H1 (cell line): ENCODE measurements at regions of chr4 and their contacts with region 1.

Region 1: GRCh38 chr4:99462875-99463464 is 27.8 kb upstream of the ADH7 start:
- DNase-seq: no peak
- H3K4me3 ChIP-seq: no peak overlapping the region
- H3K27ac ChIP-seq: no peak overlapping the region
- H3K4me1 ChIP-seq: no peaks in the 10 kb centered on the region; a peak in 1 of 7 replicates
- H3K27me3 ChIP-seq: no peaks in the 10 kb centered on the region
- CTCF ChIP-seq: peak; percentile 50 to 86 (median 82)
- EP300 ChIP-seq: no peak
- POLR2A ChIP-seq: no peak
- RAD21 ChIP-seq: peak; percentile 98 to 99

Region 2: GRCh38 chr4:99219479-99219878 is 243.5 kb before region 1 on chr4:
- CTCF ChIA-PET with region 1: no interaction called
- POLR2A ChIA-PET with region 1: no interaction called
- DNase-seq: no peak
- H3K4me3 ChIP-seq: no peak overlapping the region
- H3K27ac ChIP-seq: no peak overlapping the region
- H3K4me1 ChIP-seq: peaks cover 0 to 5% (median 1%) of the 10 kb centered on the region in 4 experiments; a peak in 2 of 7 replicates
- H3K27me3 ChIP-seq: no peaks in the 10 kb centered on the region
- CTCF ChIP-seq: no peak
- EP300 ChIP-seq: no peak
- POLR2A ChIP-seq: no peak
- RAD21 ChIP-seq: no peak

Region 3: DNA sequence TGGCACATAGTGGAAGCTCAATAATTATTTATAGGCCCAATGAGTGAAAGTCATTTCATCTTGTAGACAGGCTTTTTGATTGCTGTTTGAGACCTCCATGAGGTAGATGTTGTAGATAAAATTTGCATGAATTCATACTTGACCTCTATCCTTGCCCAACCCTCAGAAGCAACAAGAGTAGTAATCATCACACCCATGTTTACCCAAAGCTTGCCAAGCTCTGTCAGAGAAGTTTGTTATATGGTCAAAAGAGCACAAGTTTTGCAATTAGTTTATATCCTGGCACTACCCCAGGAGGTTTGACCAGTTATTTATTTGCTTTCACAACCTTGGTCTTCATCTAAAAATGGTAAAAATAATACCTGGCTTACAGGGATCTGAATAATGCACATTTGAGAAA is 48.6 kb before region 1 on chr4:
- CTCF ChIA-PET with region 1: interaction called, 99 read pairs
- POLR2A ChIA-PET with region 1: no interaction called
- DNase-seq: no peak
- H3K4me3 ChIP-seq: no peak overlapping the region
- H3K27ac ChIP-seq: no peak overlapping the region
- H3K4me1 ChIP-seq: no peaks in the 10 kb centered on the region
- H3K27me3 ChIP-seq: no peaks in the 10 kb centered on the region
- CTCF ChIP-seq: no peak
- EP300 ChIP-seq: no peak
- POLR2A ChIP-seq: no peak
- RAD21 ChIP-seq: no peak

Region 4: DNA sequence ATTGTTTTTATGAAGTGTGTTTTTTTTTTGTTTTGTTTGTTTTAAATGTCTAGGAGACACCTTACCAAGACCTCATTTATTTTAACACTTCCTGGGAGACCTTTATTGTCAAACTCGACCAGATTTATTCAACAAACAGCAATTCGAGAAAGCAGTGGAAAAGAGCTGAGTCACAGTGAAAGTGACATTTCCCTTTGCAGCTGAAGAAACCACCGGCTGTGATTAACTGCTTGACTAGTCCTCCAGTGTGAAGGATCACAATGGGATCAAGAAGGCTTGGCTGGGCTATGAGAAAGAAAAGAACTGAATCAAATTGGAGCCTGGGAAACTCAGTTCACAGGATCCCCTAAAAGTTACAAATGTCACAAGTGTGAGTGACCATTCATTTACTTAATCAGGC is 15.9 kb before region 1 on chr4:
- CTCF ChIA-PET with region 1: interaction called, 12 read pairs
- POLR2A ChIA-PET with region 1: no interaction called
- DNase-seq: no peak
- H3K4me3 ChIP-seq: no peak overlapping the region
- H3K27ac ChIP-seq: no peak overlapping the region
- H3K4me1 ChIP-seq: no peaks in the 10 kb centered on the region
- H3K27me3 ChIP-seq: no peaks in the 10 kb centered on the region
- CTCF ChIP-seq: no peak
- EP300 ChIP-seq: no peak
- POLR2A ChIP-seq: no peak
- RAD21 ChIP-seq: no peak

Region 5: DNA sequence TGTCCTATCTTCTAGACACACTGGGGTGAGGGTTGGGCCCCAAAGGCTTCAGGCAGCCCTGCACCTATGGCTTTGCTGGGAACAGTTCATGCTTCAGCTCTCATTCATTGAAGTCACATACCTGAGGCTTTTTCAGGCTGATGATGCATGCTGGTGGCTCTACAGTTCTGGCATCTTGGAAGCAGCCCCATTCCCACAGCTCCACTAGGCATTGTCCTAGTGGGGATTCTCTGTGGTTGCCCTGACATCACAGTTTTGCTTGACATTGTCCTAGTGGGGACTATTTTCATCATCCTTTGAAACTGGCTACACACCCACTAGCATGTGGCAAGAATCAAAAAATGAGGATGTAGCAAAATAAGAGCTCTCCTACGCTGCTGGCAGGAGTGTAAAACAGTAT is 10.2 kb after region 1 on chr4:
- CTCF ChIA-PET with region 1: interaction called, 15 read pairs
- POLR2A ChIA-PET with region 1: no interaction called
- DNase-seq: no peak
- H3K4me3 ChIP-seq: no peak overlapping the region
- H3K27ac ChIP-seq: no peak overlapping the region
- H3K4me1 ChIP-seq: no peaks in the 10 kb centered on the region
- H3K27me3 ChIP-seq: no peaks in the 10 kb centered on the region
- CTCF ChIP-seq: no peak
- EP300 ChIP-seq: no peak
- POLR2A ChIP-seq: no peak
- RAD21 ChIP-seq: no peak

Region 6: DNA sequence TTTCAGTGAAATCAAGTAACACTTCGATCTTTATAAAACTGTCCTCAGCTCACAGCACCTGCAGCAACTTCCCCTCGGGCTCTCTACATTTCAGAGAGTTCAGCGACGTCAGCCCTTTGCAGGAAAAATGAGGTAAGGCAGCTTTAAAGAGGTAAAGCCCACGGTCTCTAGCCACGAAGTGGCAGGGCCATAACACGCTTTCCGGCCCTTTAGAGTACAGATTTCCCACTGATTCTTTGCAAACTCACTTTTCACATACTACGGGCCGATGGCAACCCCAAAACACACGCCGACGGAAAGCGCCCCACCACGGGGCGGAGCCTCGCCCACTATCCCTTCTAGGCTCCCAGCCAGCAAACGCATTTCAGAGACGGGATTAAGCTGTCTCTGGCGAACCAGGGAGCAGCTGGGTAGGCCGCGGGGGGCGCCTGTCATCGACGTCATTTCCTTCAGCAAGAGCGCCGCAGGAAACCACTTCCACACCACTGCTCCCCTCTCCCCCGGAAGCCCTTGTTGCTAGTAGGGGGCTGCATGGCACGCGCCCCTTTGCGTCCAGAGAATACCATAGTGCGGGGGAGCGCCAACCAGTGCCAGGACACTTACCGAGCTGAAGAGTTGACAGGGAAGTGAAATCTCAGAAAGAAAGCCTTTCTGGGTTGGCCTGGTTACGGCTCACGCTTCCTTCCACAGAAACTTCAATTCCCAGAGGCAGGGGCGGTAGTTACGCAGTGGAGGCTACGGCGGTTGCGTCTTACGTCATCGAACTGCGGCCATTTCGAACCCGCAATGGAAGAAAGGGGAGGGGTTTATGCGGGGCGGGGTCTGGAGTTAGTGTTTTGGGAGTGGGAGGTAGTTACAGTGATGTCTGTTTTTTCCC is 100.6 kb after region 1 on chr4 and contains the start of gene TRMT10A:
- CTCF ChIA-PET with region 1: no interaction called
- POLR2A ChIA-PET with region 1: no interaction called
- DNase-seq: peak; percentile 90 to 94
- H3K4me3 ChIP-seq: peak within 1 kb of the TSS; percentile 73 to 89 (median 88)
- H3K27ac ChIP-seq: peak within 1 kb of the TSS; percentile 94
- H3K4me1 ChIP-seq: no peaks in the 10 kb centered on the region; a peak in 1 of 7 replicates
- H3K27me3 ChIP-seq: no peaks in the 10 kb centered on the region
- CTCF ChIP-seq: no peak
- EP300 ChIP-seq: no peak
- POLR2A ChIP-seq: peak; percentile 66 to 83
- RAD21 ChIP-seq: 0 out of 4 replicates have a peak, but pooled peaks of 1 of the 2 experiments have one; percentile 16
- total RNA-seq, gene TRMT10A: 3.3 and 3.8 TPM in 2 replicates

Region 7: GRCh38 chr4:99971453-99972111 is 508.6 kb after region 1 on chr4:
- CTCF ChIA-PET with region 1: no interaction called
- POLR2A ChIA-PET with region 1: no interaction called
- DNase-seq: no peak
- H3K4me3 ChIP-seq: no peak overlapping the region
- H3K27ac ChIP-seq: no peak overlapping the region
- H3K4me1 ChIP-seq: no peaks in the 10 kb centered on the region
- H3K27me3 ChIP-seq: no peaks in the 10 kb centered on the region
- CTCF ChIP-seq: no peak
- EP300 ChIP-seq: no peak
- POLR2A ChIP-seq: no peak
- RAD21 ChIP-seq: no peak